CD4-positive, alpha-beta T cell (primary cell): ENCODE measurements at regions of chr10 and their contacts with region 1.

Region 1: GRCh38 chr10:15201589-15202308 is 33.3 kb upstream of the NMT2 start:
- DNase-seq: no peak
- ATAC-seq: no peak
- H3K4me3 ChIP-seq: no peak overlapping the region
- H3K4me3 Mint-ChIP-seq: no peak overlapping the region
- H3K27ac ChIP-seq: no peak overlapping the region
- H3K27ac Mint-ChIP-seq: no peak overlapping the region
- H3K4me1 ChIP-seq: peaks cover 59% of the 10 kb centered on the region
- H3K4me1 Mint-ChIP-seq: peaks cover 40% of the 10 kb centered on the region
- H3K27me3 ChIP-seq: no peaks in the 10 kb centered on the region
- H3K27me3 Mint-ChIP-seq: no peaks in the 10 kb centered on the region
- CTCF ChIP-seq: no peak

Region 2: DNA sequence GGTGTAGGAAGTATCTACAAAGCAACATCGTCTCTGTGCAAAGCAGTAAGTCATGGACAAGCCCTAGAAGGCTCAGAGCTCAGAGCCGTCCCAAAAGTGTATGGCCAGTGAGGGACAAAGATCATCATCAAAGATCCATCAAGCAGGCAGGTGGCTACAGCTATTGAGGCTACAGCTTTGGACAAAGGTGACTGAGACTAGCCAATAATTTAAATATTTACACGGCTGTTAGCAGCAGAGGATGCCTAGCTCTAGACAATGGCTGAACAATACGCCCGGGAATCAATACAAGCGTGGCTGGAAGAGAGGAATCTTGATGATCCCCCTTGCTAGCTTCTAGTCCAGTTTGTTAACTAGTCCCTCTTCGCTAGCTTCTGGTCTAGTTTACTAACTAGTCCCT is 51.2 kb before region 1 on chr10:
- CTCF ChIA-PET with region 1: no interaction called
- POLR2A ChIA-PET with region 1: no interaction called
- intact Hi-C with region 1: no loop called
- DNase-seq: no peak
- ATAC-seq: no peak
- H3K4me3 ChIP-seq: no peak overlapping the region
- H3K4me3 Mint-ChIP-seq: no peak overlapping the region
- H3K27ac ChIP-seq: no peak overlapping the region
- H3K27ac Mint-ChIP-seq: no peak overlapping the region
- H3K4me1 ChIP-seq: peaks cover 34% of the 10 kb centered on the region
- H3K4me1 Mint-ChIP-seq: peaks cover 35% of the 10 kb centered on the region
- H3K27me3 ChIP-seq: no peaks in the 10 kb centered on the region
- H3K27me3 Mint-ChIP-seq: no peaks in the 10 kb centered on the region
- CTCF ChIP-seq: no peak

Region 3: GRCh38 chr10:15182540-15183207 is 19.1 kb before region 1 on chr10:
- CTCF ChIA-PET with region 1: no interaction called
- POLR2A ChIA-PET with region 1: interaction called, 6 read pairs
- intact Hi-C with region 1: loop called in 1 of 2 experiments (anchors 2 kb)
- DNase-seq: no peak
- ATAC-seq: no peak
- H3K4me3 ChIP-seq: no peak overlapping the region
- H3K4me3 Mint-ChIP-seq: no peak overlapping the region
- H3K27ac ChIP-seq: no peak overlapping the region
- H3K27ac Mint-ChIP-seq: no peak overlapping the region
- H3K4me1 ChIP-seq: peaks cover 33% of the 10 kb centered on the region
- H3K4me1 Mint-ChIP-seq: peaks cover 32% of the 10 kb centered on the region
- H3K27me3 ChIP-seq: no peaks in the 10 kb centered on the region
- H3K27me3 Mint-ChIP-seq: no peaks in the 10 kb centered on the region
- CTCF ChIP-seq: no peak

Region 4: GRCh38 chr10:15216700-15217099 is 15.0 kb after region 1 on chr10:
- CTCF ChIA-PET with region 1: no interaction called
- POLR2A ChIA-PET with region 1: no interaction called
- intact Hi-C with region 1: no loop called
- DNase-seq: no peak
- ATAC-seq: no peak
- H3K4me3 ChIP-seq: no peak overlapping the region
- H3K4me3 Mint-ChIP-seq: no peak overlapping the region
- H3K27ac ChIP-seq: no peak overlapping the region
- H3K27ac Mint-ChIP-seq: no peak overlapping the region
- H3K4me1 ChIP-seq: no peaks in the 10 kb centered on the region
- H3K4me1 Mint-ChIP-seq: no peaks in the 10 kb centered on the region
- H3K27me3 ChIP-seq: no peaks in the 10 kb centered on the region
- H3K27me3 Mint-ChIP-seq: no peaks in the 10 kb centered on the region
- CTCF ChIP-seq: no peak